ENCODE measurements at regions of chr1 and their contacts with region 1.

Region 1: DNA sequence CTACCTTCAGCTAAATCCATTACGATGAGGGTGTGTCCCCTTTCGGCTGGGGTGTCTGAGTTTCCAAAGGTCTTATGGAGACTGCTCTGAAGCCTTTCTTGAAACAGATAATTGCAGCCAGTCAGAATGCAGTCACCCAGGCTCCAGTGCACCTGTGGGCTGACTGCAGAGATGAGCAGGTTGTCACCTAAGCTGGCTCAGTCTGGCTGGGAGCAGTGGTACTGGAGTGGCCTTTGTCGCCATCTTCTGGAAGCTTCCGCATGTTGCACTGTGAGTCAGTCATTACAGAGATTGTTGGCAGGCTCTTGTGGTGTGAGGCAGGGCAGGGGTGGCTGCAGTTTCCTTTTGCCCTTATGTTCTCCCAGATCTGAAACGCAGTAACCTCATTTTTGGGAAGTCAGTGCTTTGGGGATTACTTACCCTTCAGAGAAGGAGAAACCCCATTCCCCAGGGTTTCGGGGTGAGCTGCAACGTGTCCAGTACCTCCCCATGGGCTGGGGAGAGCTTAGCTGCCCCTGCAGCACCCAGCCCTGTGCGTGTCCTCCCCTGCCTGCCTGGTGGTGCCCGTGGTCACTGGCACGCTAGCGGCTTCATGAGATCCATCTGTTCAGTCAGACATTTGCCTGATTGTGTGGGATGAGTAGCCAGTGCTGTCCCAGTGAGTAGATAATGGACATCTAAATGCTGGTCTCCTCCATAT is 48.0 kb downstream of the SMYD2 start:
- DNase-seq: peak; percentile 84

Region 2: DNA sequence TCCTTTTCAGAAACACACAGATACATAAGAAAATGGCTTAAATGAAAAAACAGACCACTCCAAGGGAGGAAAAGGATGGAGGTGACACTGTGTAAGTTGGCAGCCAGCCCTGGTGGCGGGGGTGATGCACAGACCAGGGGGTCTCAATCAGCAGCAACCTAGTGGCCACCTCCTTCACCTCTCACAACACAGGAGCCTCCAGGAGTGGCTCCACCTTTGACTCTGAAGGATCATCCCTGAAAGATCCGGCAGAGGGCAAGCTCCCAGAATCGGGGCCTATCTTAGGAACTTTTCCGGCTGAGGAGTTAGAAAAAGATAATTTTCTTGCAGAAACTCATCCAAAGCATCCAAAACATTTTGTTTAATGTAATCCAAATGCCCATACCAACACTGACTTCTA is 99.2 kb before region 1 on chr1:
- CTCF ChIA-PET with region 1: interaction called, 10 read pairs
- POLR2A ChIA-PET with region 1: no interaction called
- DNase-seq: no peak

Region 3: DNA sequence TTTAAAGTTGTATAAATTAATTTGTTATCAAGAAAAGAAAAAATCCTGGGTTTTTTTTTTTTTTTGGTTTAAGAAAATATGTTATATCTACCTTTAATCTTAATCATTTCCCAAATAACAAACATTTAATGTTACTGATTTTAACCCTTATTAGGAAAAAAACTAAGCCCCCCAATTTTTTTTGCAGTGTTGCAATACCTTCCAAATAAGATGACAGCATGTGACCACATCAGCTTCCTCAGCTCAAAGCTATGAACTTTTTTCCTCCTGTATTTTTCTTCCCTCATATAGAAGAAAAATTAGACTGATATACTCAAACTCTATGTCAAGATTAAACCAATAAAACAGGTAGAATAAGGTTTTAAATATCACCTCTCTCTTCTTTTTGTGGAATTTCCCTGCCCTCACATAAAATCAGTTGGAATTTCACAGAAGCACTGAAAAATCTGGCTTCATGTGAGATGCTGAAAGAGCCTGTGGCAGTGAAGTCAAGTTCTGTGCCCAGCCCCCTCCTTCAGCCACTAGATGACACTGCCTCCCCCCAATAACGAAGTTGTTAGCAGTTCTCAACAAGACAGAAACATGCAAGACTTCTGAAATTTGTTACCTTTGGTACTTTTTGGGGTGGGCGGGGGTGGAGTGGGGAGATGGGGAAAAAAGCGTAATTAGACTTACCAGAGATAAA is 57.6 kb before region 1 on chr1:
- CTCF ChIA-PET with region 1: interaction called, 12 read pairs
- POLR2A ChIA-PET with region 1: no interaction called
- DNase-seq: no peak

Region 4: DNA sequence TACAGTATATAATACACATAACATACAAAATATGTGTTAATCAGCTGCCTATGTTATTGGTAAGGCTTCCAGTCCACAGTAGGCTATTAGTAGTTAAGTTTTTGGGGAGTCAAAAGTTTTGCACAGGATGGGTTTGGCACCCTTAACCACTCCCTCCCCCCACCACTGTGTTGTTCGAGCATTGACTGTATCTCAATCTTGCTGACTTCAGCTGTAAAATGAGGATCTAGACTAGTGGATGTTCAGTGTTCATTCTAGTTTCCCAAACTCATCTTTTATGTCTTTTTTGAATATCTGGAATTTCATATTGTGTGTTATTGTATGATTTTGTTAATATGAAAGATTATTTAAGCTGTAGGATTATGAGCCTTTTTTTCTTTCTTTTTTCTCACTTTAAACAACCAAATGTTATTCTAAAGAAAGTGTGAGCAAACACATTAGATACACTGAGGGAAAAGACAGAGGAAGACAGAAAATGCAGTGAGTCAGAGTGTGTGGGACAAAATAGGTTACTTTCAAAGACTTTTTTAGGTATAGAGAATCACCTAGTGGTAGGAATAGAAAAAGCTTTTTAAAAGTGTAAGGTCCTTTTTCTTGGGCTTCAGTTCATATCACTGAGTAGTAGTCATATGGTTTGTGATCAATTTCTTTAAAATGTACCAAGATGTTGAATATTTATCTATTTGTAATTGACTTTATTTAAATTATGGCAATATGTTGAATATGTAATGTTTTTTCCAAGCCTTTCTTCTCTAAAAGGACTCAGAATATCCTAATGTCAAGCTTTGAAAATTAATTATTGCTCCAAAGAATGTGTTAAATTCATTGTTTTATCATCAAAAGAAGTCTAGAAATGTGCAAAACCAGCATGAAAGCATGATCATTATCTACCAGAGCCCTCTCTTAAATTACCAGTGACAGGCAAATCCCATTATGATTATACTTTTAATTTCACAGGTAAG is 256.2 kb after region 1 on chr1:
- CTCF ChIA-PET with region 1: interaction called, 95 read pairs
- POLR2A ChIA-PET with region 1: interaction called, 5 read pairs
- DNase-seq: peak; percentile 49